HEK293 (cell line): ENCODE measurements at regions of chr10 and their contacts with region 1.

Region 1: DNA sequence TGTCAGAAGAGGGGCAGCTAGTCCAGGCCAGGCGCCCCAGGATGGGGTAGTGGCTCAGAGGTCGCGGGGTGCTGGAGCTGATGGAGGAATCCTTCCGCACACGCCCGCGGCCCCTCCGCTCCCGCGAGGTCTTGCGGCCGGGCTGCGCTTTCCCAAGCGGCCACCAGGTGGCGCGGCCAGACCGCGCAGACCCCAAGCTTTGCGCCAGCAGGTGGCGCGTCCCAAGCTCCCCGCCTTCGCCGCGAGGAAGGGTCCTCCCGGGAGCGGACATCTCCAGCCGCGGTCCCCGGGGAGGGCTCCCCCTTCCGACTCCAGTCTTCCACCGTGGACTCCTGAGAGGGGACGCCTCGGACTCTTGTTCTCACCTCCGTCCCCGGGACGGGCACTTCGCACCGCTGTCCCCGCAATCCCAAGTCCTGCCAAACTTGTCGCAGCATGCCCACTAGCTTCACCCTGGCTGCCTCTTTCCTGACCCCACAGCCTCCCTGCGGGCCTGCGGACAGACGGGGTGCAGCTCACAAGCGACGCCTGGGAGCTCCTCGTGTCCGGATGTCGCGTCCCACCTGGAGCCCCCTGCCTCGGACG is 19.4 kb downstream of the KCNK18 start:
- H3K4me3 ChIP-seq: peak overlapping the region; percentile 34
- H3K27ac ChIP-seq: peak overlapping the region; percentile 34; the same call in 1 of the 2 replicates
- H3K4me1 ChIP-seq: peaks cover 3% of the 10 kb centered on the region; the same call in 1 of the 2 replicates
- CTCF ChIP-seq: peak; percentile 100

Region 2: DNA sequence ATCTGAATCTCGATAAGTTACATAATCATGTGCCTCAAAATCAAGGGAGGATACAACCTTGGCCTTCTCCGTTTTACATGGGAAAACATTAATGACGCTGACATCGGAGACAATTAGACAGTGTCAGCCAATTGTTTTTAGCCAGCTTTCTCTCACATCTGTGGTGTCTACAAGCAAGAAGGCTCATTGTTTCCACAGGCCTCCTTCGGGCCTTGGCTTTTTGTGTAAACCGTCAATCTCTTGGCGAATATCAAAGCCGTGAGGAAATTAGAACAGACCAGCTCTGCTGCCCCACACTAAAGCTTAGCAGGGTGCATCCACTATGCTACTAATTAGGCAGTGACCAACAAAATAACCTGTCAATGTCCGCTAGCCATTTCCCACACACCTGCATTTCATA is 121.8 kb before region 1 on chr10:
- CTCF ChIA-PET with region 1: no interaction called
- POLR2A ChIA-PET with region 1: no interaction called
- H3K4me3 ChIP-seq: no peak overlapping the region
- H3K27ac ChIP-seq: no peak overlapping the region
- H3K4me1 ChIP-seq: no peaks in the 10 kb centered on the region
- CTCF ChIP-seq: no peak

Region 3: DNA sequence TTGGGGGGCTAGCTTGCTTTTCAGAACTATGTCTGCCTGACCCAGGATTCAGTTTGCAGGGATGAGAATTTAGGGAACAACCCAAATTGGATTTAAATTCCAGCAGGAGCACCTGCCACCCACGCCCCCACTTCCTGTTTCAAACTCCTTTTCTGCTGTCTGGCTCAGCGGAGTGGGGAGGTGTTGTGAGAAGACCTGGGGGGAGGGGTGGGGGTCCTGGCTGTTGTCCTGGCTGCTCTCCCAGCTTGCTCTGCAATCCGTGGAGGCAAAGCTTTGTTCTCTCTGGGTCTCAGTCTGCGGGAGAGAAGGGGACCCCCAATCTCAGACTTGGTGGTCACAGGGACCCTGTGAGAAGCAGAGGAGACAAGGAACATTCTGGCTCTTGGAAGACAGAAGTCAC is 18.6 kb before region 1 on chr10:
- CTCF ChIA-PET with region 1: interaction called, 10 read pairs
- POLR2A ChIA-PET with region 1: no interaction called
- H3K4me3 ChIP-seq: no peak overlapping the region
- H3K27ac ChIP-seq: no peak overlapping the region
- H3K4me1 ChIP-seq: no peaks in the 10 kb centered on the region
- CTCF ChIP-seq: no peak

Region 4: GRCh38 chr10:117226824-117227451 is 10.2 kb after region 1 on chr10:
- CTCF ChIA-PET with region 1: interaction called, 31 read pairs
- POLR2A ChIA-PET with region 1: no interaction called
- H3K4me3 ChIP-seq: no peak overlapping the region
- H3K27ac ChIP-seq: no peak overlapping the region
- H3K4me1 ChIP-seq: no peaks in the 10 kb centered on the region; the same call in 1 of the 2 replicates
- CTCF ChIP-seq: no peak; the same call in 1 of the 2 replicates

Region 5: GRCh38 chr10:117320050-117320665 is 103.5 kb after region 1 on chr10:
- CTCF ChIA-PET with region 1: interaction called, 142 read pairs
- POLR2A ChIA-PET with region 1: interaction called, 5 read pairs
- H3K4me3 ChIP-seq: no peak overlapping the region
- H3K27ac ChIP-seq: no peak overlapping the region
- H3K4me1 ChIP-seq: peaks cover 9% of the 10 kb centered on the region
- CTCF ChIP-seq: peak; percentile 34; the same call in 1 of the 2 replicates

Region 6: GRCh38 chr10:117425974-117426566 is 209.4 kb after region 1 on chr10:
- CTCF ChIA-PET with region 1: interaction called, 10 read pairs
- POLR2A ChIA-PET with region 1: no interaction called
- H3K4me3 ChIP-seq: no peak overlapping the region
- H3K27ac ChIP-seq: no peak overlapping the region
- H3K4me1 ChIP-seq: no peaks in the 10 kb centered on the region
- CTCF ChIP-seq: no peak

Region 7: DNA sequence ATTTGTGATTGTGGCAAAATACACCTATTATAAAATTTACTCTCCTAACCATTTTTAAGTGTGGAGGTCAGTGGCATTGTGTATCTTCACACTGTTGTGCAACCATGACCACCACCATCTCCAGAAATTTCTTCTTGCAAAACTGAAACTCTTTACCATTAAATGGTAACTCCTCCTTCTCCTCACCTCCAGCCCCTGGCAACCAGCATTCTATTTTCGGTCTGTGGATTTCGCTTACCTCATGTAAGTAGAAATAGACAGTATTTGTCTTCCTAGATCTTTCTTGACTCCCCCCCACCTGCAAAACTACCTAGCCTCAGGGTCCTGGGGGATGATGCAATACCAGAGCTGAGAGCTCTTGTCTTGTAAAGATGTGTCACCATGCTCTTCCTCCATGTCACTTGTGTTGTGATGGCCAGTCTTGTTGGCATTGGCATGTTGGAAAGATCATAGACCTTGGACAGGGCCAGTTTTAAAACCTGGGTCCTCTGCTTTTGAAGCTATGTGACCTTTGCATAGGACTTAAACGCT is 254.7 kb after region 1 on chr10:
- CTCF ChIA-PET with region 1: no interaction called
- POLR2A ChIA-PET with region 1: no interaction called
- H3K4me3 ChIP-seq: no peak overlapping the region
- H3K27ac ChIP-seq: no peak overlapping the region
- H3K4me1 ChIP-seq: no peaks in the 10 kb centered on the region
- CTCF ChIP-seq: no peak